BJ (cell line): ENCODE measurements at regions of chr9 and their contacts with region 1.

Region 1: DNA sequence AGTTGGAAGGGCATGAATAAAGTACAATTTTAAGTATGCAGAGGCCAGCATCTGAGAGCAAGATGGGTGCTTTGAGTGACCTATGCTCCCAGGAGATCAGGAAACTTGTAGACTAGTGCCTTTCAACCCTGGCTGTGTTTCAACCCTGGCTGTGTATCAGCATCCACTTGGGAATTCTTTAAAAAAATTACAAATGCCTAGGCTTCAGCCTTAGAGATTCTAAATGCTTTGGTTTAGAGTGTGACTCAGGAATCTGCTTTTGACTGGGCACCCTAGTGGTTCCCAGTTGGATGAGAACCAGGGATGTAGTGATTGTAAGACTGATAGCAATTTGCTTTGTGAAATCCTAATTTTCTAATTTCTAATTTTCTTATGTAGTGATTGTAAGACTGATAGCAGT is 65.6 kb downstream of the RALGPS1 start:
- DNase-seq: no peak
- H3K4me3 ChIP-seq: no peak overlapping the region
- H3K27me3 ChIP-seq: no peaks in the 10 kb centered on the region; the same call in 1 of the 2 replicates
- CTCF ChIP-seq: no peak

Region 2: GRCh38 chr9:126965541-126966428 is 14.4 kb before region 1 on chr9:
- CTCF ChIA-PET with region 1: interaction called, 20 read pairs
- POLR2A ChIA-PET with region 1: no interaction called
- DNase-seq: no peak
- H3K4me3 ChIP-seq: no peak overlapping the region
- H3K27me3 ChIP-seq: no peaks in the 10 kb centered on the region; the same call in 1 of the 2 replicates
- CTCF ChIP-seq: peak; percentile 92

Region 3: DNA sequence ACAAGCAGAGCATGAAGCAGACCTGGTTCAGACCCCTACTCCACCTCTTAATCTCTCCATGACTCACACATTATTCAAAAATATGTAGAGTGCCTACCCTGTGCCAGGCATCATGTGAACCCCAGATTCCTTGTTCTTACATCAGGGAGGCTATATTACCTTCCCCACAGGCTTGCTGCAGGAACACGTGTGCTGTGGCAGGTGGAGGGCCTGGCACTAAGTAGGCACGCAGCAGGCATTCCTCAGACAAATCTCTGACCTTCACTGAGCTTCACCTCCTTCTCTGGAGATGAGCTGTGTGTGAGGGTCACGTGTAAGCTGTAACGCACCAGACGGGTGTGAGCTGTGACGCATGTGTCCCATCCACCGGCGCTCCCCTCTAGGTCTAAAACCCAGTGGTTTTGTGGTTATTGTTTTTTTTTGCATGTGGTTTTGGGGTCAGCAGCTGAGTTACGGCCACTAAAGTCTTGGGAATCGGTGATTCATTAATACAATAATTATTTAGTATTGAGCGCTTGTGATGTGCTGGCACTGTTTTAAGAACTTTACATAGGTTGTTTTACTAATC is 111.9 kb after region 1 on chr9:
- CTCF ChIA-PET with region 1: no interaction called
- POLR2A ChIA-PET with region 1: no interaction called
- DNase-seq: no peak
- H3K4me3 ChIP-seq: no peak overlapping the region
- H3K27me3 ChIP-seq: no peaks in the 10 kb centered on the region; the same call in 1 of the 2 replicates
- CTCF ChIP-seq: no peak